Naive thymus-derived CD4-positive, alpha-beta T cell (primary cell): ENCODE measurements at regions of chr22 and their contacts with region 1.

Region 1: DNA sequence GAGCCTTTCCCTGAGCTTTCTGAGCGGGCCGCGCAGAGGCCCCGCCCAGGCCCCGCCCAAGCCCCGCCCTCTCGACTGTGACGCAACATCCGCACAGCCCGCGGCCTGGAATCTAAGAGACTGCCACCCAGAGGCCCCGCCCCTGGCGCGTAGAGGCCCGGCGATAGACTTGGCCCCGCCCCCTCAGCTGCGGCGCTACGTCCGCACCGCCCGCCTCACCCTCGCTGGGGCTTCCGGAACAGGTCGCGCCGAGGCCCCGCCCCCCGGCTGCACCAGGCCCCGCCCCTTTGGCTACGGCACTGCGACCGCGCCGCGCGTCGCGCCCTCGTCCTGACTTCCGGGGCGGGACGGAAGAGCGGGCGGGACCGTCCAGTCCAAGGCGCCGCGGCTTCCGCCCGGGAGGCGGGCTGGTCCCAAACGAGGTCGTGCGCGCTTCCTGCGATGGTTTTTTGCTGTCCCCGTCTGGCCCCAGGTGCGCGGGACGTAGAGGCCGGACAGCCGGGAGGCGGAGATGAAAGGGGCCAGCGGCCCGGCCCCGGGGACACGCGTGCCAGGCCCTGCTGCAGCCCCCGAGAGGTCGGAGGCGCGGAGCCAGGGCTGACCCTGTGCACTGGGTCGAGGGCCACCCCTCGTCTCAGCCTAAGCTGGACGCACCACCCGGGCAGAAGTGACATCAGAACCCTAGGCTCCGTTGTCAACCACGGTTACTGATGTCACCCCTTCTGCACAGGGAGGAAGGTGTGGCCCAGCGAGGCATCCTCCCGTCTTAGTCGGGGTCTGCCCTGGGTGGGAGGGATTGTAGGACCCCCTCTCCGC is 59.0 kb upstream of the WNT7B start:
- DNase-seq: peak; percentile 99 to 100 (median 100)
- ATAC-seq: peak; percentile 95
- H3K4me3 ChIP-seq: peak overlapping the region; percentile 91
- H3K4me3 Mint-ChIP-seq: peak overlapping the region; percentile 80 to 92 (median 86)
- H3K27ac ChIP-seq: peak overlapping the region; percentile 98
- H3K27ac Mint-ChIP-seq: peak overlapping the region; percentile 87 to 97 (median 95)
- H3K4me1 ChIP-seq: peaks cover 17 to 18% of the 10 kb centered on the region in 2 donors
- H3K4me1 Mint-ChIP-seq: peaks cover 5 to 31% (median 21%) of the 10 kb centered on the region in 7 donors
- H3K27me3 ChIP-seq: no peaks in the 10 kb centered on the region
- H3K27me3 Mint-ChIP-seq: no peaks in the 10 kb centered on the region

Region 2: DNA sequence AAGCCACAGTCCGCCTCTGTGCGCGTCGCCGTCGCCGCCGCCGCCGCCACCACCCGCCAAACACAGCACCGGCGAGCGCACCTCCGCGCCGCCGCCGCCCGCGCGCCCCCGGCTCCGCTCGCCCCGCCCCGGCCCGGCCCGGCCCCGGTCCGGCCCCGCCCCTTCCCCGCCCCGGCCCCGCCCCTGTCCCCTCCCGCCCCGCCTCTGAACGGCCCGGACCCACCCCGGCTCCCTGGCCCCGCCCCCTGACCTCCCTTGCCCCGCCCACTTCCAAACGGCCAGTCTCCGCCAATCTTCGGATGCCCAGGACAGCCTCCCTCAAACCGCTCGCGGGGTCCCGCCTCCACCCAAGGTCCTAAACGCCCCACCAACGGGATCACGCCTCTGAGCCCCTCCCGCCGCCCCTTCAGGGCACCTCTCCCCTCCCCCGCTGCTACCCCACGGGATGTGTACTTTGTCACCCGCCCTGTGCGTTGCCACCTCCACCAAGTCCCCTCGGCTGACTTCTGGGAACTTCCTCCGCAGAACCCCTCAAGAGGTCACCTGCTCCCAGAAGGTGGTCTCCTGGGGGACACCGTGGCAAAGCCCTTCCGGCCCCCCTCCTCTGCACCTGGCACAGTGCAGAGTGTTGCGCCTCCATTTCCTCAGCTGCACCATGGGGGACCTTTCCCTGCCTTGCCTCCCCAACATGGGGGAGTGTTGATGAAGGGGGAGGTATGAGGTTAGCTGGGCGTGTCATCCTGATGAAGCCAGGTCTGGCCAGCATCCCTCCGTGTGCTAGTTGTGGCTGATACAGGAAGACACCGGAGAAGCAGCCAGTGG is 794.9 kb before region 1 on chr22 and contains the start of gene KIAA0930:
- CTCF ChIA-PET with region 1: no interaction called
- POLR2A ChIA-PET with region 1: no interaction called
- intact Hi-C with region 1: loop called in 1 of 2 experiments (anchors 5 kb)
- DNase-seq: peak; percentile 62 to 84 (median 74)
- ATAC-seq: peak; percentile 90
- H3K4me3 ChIP-seq: peak within 1 kb of the TSS; percentile 60
- H3K4me3 Mint-ChIP-seq: peak within 1 kb of the TSS; percentile 85 to 99 (median 94)
- H3K27ac ChIP-seq: peak within 1 kb of the TSS; percentile 66
- H3K27ac Mint-ChIP-seq: peak within 1 kb of the TSS; percentile 72 to 93 (median 87)
- H3K4me1 ChIP-seq: peaks cover 11 to 17% of the 10 kb centered on the region in 2 donors
- H3K4me1 Mint-ChIP-seq: peaks cover 18 to 40% (median 32%) of the 10 kb centered on the region in 7 donors
- H3K27me3 ChIP-seq: no peaks in the 10 kb centered on the region
- H3K27me3 Mint-ChIP-seq: peaks cover 0 to 2% (median 0%) of the 10 kb centered on the region in 5 donors
- total RNA-seq, gene KIAA0930: 13.2 to 58.2 (median 27.9) TPM

Region 3: DNA sequence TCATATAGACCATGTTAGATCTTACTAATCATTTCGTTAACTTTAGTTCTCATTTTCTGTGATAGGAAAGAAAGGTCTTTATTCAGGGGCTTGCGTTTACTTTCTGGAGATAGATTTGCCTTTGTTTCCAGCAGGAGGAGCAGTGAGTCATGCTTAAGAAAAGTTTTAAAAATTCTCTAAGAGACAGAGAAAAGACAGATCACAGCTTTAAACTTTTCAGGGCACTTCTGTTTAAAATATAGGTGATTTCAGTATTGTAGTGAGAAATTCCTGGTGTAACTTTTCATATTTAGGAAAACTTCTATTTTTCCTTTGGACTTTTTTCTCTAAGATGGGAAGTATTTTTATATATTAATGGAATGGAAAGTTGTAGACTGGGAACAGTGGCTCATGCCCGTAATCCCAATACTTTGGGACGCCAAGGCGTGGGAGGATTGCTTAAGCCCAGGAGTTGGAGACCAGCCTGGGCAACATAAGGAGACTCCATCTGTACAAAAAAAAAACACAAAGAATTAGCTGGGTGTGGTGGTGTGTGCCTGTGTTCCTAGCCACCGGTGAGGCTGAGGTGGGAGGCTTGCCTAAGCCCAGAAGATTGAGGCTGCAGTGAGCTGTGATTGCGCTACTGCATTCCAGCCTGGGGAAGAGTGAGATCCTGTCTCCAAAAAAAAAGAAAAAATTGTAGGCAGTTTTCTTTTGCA is 304.0 kb before region 1 on chr22:
- CTCF ChIA-PET with region 1: no interaction called
- POLR2A ChIA-PET with region 1: no interaction called
- intact Hi-C with region 1: no loop called
- DNase-seq: no peak
- ATAC-seq: no peak
- H3K4me3 ChIP-seq: no peak overlapping the region
- H3K4me3 Mint-ChIP-seq: no peak overlapping the region
- H3K27ac ChIP-seq: no peak overlapping the region
- H3K27ac Mint-ChIP-seq: peak overlapping the region in 1 of 9 donors; percentile 27
- H3K4me1 ChIP-seq: no peaks in the 10 kb centered on the region
- H3K4me1 Mint-ChIP-seq: peaks cover 5 to 24% (median 10%) of the 10 kb centered on the region in 7 donors
- H3K27me3 ChIP-seq: no peaks in the 10 kb centered on the region
- H3K27me3 Mint-ChIP-seq: no peaks in the 10 kb centered on the region

Region 4: GRCh38 chr22:45994491-45995404 is 41.2 kb before region 1 on chr22:
- CTCF ChIA-PET with region 1: interaction called, 10 read pairs
- POLR2A ChIA-PET with region 1: no interaction called
- intact Hi-C with region 1: loop called in 1 of 2 experiments (anchors 5 kb)
- DNase-seq: peak; percentile 52 to 87 (median 69)
- ATAC-seq: peak; percentile 61
- H3K4me3 ChIP-seq: no peak overlapping the region
- H3K4me3 Mint-ChIP-seq: no peak overlapping the region
- H3K27ac ChIP-seq: no peak overlapping the region
- H3K27ac Mint-ChIP-seq: peak overlapping the region in 2 of 9 donors; percentile 30 to 64
- H3K4me1 ChIP-seq: peaks cover 0 to 6% of the 10 kb centered on the region in 2 donors
- H3K4me1 Mint-ChIP-seq: peaks cover 0 to 13% (median 3%) of the 10 kb centered on the region in 7 donors
- H3K27me3 ChIP-seq: no peaks in the 10 kb centered on the region
- H3K27me3 Mint-ChIP-seq: peaks cover 0 to 10% (median 4%) of the 10 kb centered on the region in 5 donors

Region 5: DNA sequence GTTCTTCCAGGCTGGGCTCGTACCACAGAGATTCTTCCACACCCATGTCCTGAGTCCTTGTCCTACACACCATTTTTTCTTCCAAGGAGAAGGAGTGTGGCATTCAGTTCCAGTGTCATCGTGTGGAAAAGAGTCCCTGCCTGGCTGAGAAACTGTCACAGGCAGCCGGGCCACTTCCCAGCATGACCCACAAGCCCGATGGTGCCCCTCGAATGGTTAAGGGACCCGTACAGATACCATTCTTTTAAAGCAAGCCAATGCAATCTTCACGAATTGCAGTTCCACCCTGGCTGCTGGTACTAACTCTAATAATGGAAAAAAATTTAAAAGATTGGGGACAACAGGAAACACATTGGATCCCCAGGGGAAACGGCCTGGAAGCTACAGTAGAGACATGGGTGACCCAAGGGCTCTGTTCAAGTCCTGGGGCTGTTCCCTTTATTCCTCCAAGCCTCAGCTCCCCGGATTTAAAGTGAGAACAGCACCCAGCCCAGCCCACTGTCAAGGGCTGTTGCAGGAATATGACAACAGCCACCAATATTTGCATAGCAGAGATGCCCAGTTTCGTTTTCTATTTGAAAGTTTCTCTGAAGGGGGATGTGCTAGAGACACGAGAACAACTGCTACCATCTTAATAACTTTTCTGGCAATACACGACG is 21.9 kb after region 1 on chr22:
- CTCF ChIA-PET with region 1: interaction called, 5 read pairs
- POLR2A ChIA-PET with region 1: interaction called, 104 read pairs
- intact Hi-C with region 1: loop called (anchors 1 kb)
- DNase-seq: peak in 5 of 9 donors; percentile 39 to 55 (median 53)
- ATAC-seq: peak; percentile 74
- H3K4me3 ChIP-seq: no peak overlapping the region
- H3K4me3 Mint-ChIP-seq: peak overlapping the region; percentile 17 to 71 (median 66)
- H3K27ac ChIP-seq: peak overlapping the region; percentile 72
- H3K27ac Mint-ChIP-seq: peak overlapping the region; percentile 84 to 95 (median 87)
- H3K4me1 ChIP-seq: peaks cover 19 to 35% of the 10 kb centered on the region in 2 donors
- H3K4me1 Mint-ChIP-seq: peaks cover 29 to 64% (median 58%) of the 10 kb centered on the region in 7 donors
- H3K27me3 ChIP-seq: no peaks in the 10 kb centered on the region
- H3K27me3 Mint-ChIP-seq: peaks cover 0 to 5% (median 0%) of the 10 kb centered on the region in 5 donors

Region 6: DNA sequence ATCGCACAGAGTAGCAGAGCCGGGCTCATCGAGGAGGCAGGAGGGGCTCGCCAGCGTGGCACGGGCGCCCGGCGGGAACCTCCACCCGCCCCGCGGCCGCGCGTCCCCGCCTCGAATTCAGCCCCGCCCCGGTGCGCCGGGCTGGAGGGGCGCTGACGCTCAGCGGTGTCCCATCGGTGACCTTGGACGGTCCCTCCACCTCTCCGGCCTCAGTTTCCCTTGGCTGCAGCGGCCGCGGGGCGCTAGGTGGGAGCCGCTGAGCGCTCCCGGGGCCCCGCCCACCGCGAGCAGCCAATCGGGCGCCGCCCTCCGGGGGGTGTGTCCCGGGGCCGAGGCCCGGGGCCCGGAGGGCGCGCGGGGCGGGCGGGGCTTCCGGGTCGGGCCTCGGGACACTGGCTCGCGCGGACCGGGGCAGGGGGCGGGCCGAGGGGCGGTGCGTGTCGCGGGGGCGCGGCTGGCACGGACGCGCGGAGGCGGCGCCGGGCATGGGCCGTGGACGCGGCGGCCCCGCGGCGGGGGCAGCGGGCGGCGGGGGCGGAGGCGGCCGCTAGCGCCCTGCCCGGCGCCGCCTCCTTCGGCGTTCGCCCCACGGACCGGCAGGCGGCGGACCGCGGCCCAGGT is 114.2 kb after region 1 on chr22 and contains the start of gene PPARA:
- CTCF ChIA-PET with region 1: no interaction called
- POLR2A ChIA-PET with region 1: interaction called, 6 read pairs
- intact Hi-C with region 1: loop called in 1 of 2 experiments (anchors 1 kb)
- DNase-seq: peak; percentile 63 to 97 (median 73)
- ATAC-seq: peak; percentile 90
- H3K4me3 ChIP-seq: peak within 1 kb of the TSS; percentile 74
- H3K4me3 Mint-ChIP-seq: peak within 1 kb of the TSS; percentile 77 to 90 (median 86)
- H3K27ac ChIP-seq: peak within 1 kb of the TSS; percentile 71
- H3K27ac Mint-ChIP-seq: peak within 1 kb of the TSS; percentile 34 to 90 (median 82)
- H3K4me1 ChIP-seq: peaks cover 10 to 15% of the 10 kb centered on the region in 2 donors
- H3K4me1 Mint-ChIP-seq: peaks cover 13 to 24% (median 20%) of the 10 kb centered on the region in 7 donors
- H3K27me3 ChIP-seq: no peaks in the 10 kb centered on the region
- H3K27me3 Mint-ChIP-seq: peaks cover 0 to 40% (median 0%) of the 10 kb centered on the region in 5 donors
- total RNA-seq, gene PPARA: 13.7 to 21.6 (median 18.5) TPM

Region 7: GRCh38 chr22:46328782-46329181 is 292.8 kb after region 1 on chr22:
- CTCF ChIA-PET with region 1: no interaction called
- POLR2A ChIA-PET with region 1: no interaction called
- intact Hi-C with region 1: no loop called
- DNase-seq: no peak
- ATAC-seq: no peak
- H3K4me3 ChIP-seq: no peak overlapping the region
- H3K4me3 Mint-ChIP-seq: no peak overlapping the region
- H3K27ac ChIP-seq: no peak overlapping the region
- H3K27ac Mint-ChIP-seq: no peak overlapping the region
- H3K4me1 ChIP-seq: no peaks in the 10 kb centered on the region
- H3K4me1 Mint-ChIP-seq: no peaks in the 10 kb centered on the region
- H3K27me3 ChIP-seq: no peaks in the 10 kb centered on the region
- H3K27me3 Mint-ChIP-seq: no peaks in the 10 kb centered on the region